CD4-positive, alpha-beta T cell (primary cell): ENCODE measurements at regions of chr9 and their contacts with region 1.

Region 1: GRCh38 chr9:129028192-129028957 is at the start of gene SH3GLB2:
- DNase-seq: peak; percentile 88 to 98 (median 92)
- ATAC-seq: peak; percentile 84
- H3K4me3 ChIP-seq: peak within 1 kb of the TSS; percentile 78
- H3K4me3 Mint-ChIP-seq: peak within 1 kb of the TSS; percentile 87
- H3K27ac ChIP-seq: peak within 1 kb of the TSS; percentile 12 to 53
- H3K27ac Mint-ChIP-seq: peak within 1 kb of the TSS; percentile 81
- H3K4me1 ChIP-seq: peaks cover 34% of the 10 kb centered on the region
- H3K4me1 Mint-ChIP-seq: peaks cover 25% of the 10 kb centered on the region
- H3K27me3 ChIP-seq: no peaks in the 10 kb centered on the region
- H3K27me3 Mint-ChIP-seq: no peaks in the 10 kb centered on the region
- CTCF ChIP-seq: no peak
- total RNA-seq, gene SH3GLB2: 65.6 to 69.1 TPM

Region 2: GRCh38 chr9:129110740-129111527 is 82.6 kb after region 1 on chr9 and contains the starts of genes CRAT and PTPA:
- CTCF ChIA-PET with region 1: no interaction called
- POLR2A ChIA-PET with region 1: interaction called, 5 read pairs
- intact Hi-C with region 1: loop called in 1 of 2 experiments (anchors 2 kb)
- DNase-seq: peak; percentile 93 to 99 (median 96)
- ATAC-seq: peak; percentile 85
- H3K4me3 ChIP-seq: peak within 1 kb of the TSS; percentile 93
- H3K4me3 Mint-ChIP-seq: peak within 1 kb of the TSS; percentile 98
- H3K27ac ChIP-seq: peak within 1 kb of the TSS; percentile 70 to 92
- H3K27ac Mint-ChIP-seq: peak within 1 kb of the TSS; percentile 92
- H3K4me1 ChIP-seq: peaks cover 34% of the 10 kb centered on the region
- H3K4me1 Mint-ChIP-seq: peaks cover 36% of the 10 kb centered on the region
- H3K27me3 ChIP-seq: no peaks in the 10 kb centered on the region
- H3K27me3 Mint-ChIP-seq: no peaks in the 10 kb centered on the region
- CTCF ChIP-seq: no peak
- total RNA-seq, gene CRAT: 7.1 to 9.4 TPM
- total RNA-seq, gene PTPA: 21.6 to 23.3 TPM

Region 3: GRCh38 chr9:129626079-129626624 is 597.8 kb after region 1 on chr9 and contains the start of gene NTMT1:
- CTCF ChIA-PET with region 1: no interaction called
- POLR2A ChIA-PET with region 1: interaction called, 8 read pairs
- intact Hi-C with region 1: loop called in 1 of 2 experiments (anchors 5 kb)
- DNase-seq: peak; percentile 85 to 97 (median 90)
- ATAC-seq: peak; percentile 65
- H3K4me3 ChIP-seq: peak within 1 kb of the TSS; percentile 75
- H3K4me3 Mint-ChIP-seq: peak within 1 kb of the TSS; percentile 94
- H3K27ac ChIP-seq: peak within 1 kb of the TSS; percentile 77 to 98
- H3K27ac Mint-ChIP-seq: peak within 1 kb of the TSS; percentile 94
- H3K4me1 ChIP-seq: peaks cover 70% of the 10 kb centered on the region
- H3K4me1 Mint-ChIP-seq: peaks cover 63% of the 10 kb centered on the region
- H3K27me3 ChIP-seq: peaks cover 6 to 10% of the 10 kb centered on the region in 2 experiments
- H3K27me3 Mint-ChIP-seq: peaks cover 13% of the 10 kb centered on the region
- CTCF ChIP-seq: no peak
- total RNA-seq, gene NTMT1: 50.7 to 52.5 TPM